Heart right ventricle (tissue), 16 donors: ENCODE measurements at regions of chr17 and their contacts with region 1.

Region 1: GRCh38 chr17:16537130-16537458 is 31.9 kb downstream of the ZNF287 start:
- DNase-seq: no peak
- ATAC-seq: no peak
- H3K4me3 ChIP-seq: peak overlapping the region in 3 of 10 donors; percentile 72 to 78 (median 72)
- H3K27ac ChIP-seq: peak overlapping the region in 4 of 10 donors; percentile 19 to 97 (median 94)
- H3K4me1 ChIP-seq: peaks cover 0 to 16% (median 2%) of the 10 kb centered on the region in 9 donors
- H3K27me3 ChIP-seq: peaks cover 0 to 5% (median 0%) of the 10 kb centered on the region in 7 donors
- CTCF ChIP-seq: no peak

Region 2: DNA sequence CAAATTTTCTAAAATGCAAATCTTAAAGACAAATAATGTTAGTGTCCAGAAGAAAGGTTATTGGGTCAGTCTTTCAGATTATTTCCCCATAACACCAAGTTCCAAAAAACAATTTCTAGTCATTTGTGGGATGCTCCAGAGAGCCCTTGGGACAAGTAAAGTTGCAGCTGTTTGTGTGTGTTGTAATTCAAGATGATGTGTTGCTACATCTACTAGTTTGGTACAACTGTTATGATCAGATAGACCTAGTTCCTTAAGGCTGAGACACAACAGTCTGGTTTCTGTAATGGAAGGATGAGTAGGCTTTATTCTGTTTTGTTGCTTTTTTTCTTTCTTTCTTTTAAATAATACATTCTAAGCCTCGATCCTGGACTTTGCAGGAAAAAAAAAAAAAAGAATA is 278.2 kb before region 1 on chr17:
- intact Hi-C with region 1: no loop called
- DNase-seq: no peak
- ATAC-seq: peak in 1 of 8 donors; percentile 68
- H3K4me3 ChIP-seq: no peak overlapping the region
- H3K27ac ChIP-seq: peak overlapping the region in 1 of 10 donors; percentile 5
- H3K4me1 ChIP-seq: peaks cover 6 to 29% (median 19%) of the 10 kb centered on the region in 9 donors
- H3K27me3 ChIP-seq: no peaks in the 10 kb centered on the region
- CTCF ChIP-seq: no peak

Region 3: DNA sequence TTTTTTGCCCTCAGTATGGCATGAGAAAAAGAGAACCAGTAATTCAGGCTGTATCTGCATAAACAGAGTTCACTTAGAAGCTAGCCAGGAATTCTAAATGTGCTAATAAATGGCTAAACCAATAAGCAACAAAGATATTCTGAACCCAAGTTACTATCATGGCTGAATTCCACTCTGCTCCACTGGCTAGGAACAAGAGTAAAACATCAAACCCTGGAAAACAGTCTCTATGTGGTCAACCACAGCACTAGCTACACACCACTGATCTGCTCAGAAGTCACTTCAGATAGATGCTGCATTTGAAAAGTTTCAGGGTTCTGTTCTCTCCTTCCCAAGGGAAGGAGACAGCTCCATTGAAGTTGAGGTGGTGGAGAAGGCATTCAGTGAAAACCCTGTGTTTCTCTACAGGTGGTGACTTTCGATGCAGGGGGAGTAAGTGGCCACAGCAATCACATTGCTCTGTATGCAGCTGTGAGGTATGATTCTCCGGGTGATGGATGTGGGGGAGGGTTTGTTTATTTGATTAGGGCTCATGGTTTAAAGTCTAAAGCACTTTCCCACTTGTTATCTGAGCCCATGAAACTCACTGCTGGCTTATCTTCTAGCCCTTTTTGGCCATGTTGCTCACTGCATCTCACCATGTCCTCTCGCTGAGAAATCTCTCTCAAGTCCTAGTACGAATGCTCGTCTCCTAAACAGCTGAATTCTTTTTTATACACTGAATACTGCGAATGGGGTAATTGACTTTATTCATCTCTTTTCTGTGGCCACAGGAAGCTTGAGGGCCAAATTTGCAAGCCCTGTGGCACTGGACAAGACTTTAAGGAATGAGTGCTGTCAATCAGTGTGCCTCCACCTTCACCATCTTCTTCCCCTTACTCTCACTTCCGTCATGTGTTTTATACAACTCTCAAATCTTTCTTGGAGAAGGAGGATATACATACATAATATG is 223.7 kb before region 1 on chr17:
- intact Hi-C with region 1: no loop called
- DNase-seq: no peak
- ATAC-seq: no peak
- H3K4me3 ChIP-seq: no peak overlapping the region
- H3K27ac ChIP-seq: no peak overlapping the region
- H3K4me1 ChIP-seq: no peaks in the 10 kb centered on the region
- H3K27me3 ChIP-seq: no peaks in the 10 kb centered on the region
- CTCF ChIP-seq: no peak

Region 4: GRCh38 chr17:16568541-16569357 is 31.7 kb after region 1 on chr17 and contains the start of gene ZNF287:
- intact Hi-C with region 1: loop called in 2 of 10 experiments (anchors 1 to 2 kb)
- DNase-seq: peak; percentile 96
- ATAC-seq: peak; percentile 98 to 100 (median 100)
- H3K4me3 ChIP-seq: peak within 1 kb of the TSS; percentile 45 to 94 (median 82)
- H3K27ac ChIP-seq: peak within 1 kb of the TSS; percentile 8 to 84 (median 74)
- H3K4me1 ChIP-seq: peaks cover 0 to 16% (median 9%) of the 10 kb centered on the region in 9 donors
- H3K27me3 ChIP-seq: no peaks in the 10 kb centered on the region
- CTCF ChIP-seq: no peak
- total RNA-seq, gene ZNF287: 7.8 to 14.6 (median 11.4) TPM

Region 5: DNA sequence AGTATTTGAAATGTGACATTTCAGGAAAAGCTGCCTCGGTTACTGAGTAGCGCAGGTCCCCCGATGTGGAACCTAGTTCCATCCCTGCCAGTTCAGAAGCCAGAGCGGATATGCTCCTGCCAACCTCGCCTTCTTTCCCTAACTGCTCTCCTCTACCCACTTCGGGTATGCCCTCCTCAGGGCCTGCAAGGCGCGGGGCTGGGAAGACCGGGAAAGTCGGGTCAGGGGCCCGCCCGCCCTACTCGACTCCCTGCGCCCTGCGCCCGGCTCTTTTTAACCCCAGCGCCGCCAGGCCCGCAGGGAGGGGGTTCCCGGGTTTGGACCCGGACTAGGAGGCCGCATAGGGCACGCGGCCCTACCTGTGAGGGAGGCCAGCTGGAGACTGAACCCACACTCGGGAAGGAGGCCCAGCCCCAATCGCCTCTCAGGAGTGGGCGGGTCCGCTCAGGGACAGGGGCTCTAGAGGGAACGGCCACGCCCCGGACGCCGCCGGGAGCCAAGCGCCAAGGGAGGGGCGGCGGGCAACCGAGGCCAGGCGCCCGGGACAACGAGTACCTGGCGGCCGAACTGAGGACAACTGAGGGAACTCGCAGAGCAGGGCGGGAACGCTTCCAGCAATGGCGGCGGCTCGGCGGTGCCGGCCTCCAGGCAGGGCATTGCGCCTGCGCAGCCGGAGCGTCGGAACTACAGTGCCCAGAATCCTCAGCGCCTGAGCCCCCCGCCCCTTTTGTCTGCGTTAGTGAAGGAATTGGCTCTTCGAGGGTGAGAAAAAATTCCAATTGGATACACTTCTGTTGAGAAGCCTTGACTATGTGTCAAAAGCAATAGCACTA is 116.3 kb after region 1 on chr17 and contains the start of gene ZNF624:
- intact Hi-C with region 1: loop called in 1 of 10 experiments (anchors 5 kb)
- DNase-seq: peak; percentile 94 to 98
- ATAC-seq: peak; percentile 95 to 99 (median 98)
- H3K4me3 ChIP-seq: peak within 1 kb of the TSS; percentile 47 to 87 (median 74)
- H3K27ac ChIP-seq: peak within 1 kb of the TSS; percentile 89 to 97 (median 95)
- H3K4me1 ChIP-seq: peaks cover 0 to 19% (median 13%) of the 10 kb centered on the region in 9 donors
- H3K27me3 ChIP-seq: no peaks in the 10 kb centered on the region
- CTCF ChIP-seq: no peak
- total RNA-seq, gene ZNF624: 1.4 to 2.9 (median 2.1) TPM